Activated CD4-positive, alpha-beta memory T cell treated with anti-CD3 and anti-CD28 coated beads for 36 hours (primary cell): ENCODE measurements at regions of chr6 and their contacts with region 1.

Region 1: GRCh38 chr6:6057424-6058053 is 50.8 kb upstream of the NRN1 start:
- DNase-seq: no peak
- H3K4me3 Mint-ChIP-seq: no peak overlapping the region
- H3K27ac Mint-ChIP-seq: no peak overlapping the region
- H3K4me1 Mint-ChIP-seq: no peaks in the 10 kb centered on the region
- H3K27me3 Mint-ChIP-seq: peaks cover 21% of the 10 kb centered on the region

Region 2: GRCh38 chr6:5778317-5778857 is 279.2 kb before region 1 on chr6:
- CTCF ChIA-PET with region 1: no interaction called
- POLR2A ChIA-PET with region 1: no interaction called
- intact Hi-C with region 1: no loop called
- DNase-seq: no peak
- H3K4me3 Mint-ChIP-seq: no peak overlapping the region
- H3K27ac Mint-ChIP-seq: no peak overlapping the region
- H3K4me1 Mint-ChIP-seq: no peaks in the 10 kb centered on the region
- H3K27me3 Mint-ChIP-seq: no peaks in the 10 kb centered on the region

Region 3: GRCh38 chr6:5968817-5969734 is 88.5 kb before region 1 on chr6:
- CTCF ChIA-PET with region 1: no interaction called
- POLR2A ChIA-PET with region 1: no interaction called
- intact Hi-C with region 1: no loop called
- DNase-seq: no peak
- H3K4me3 Mint-ChIP-seq: no peak overlapping the region
- H3K27ac Mint-ChIP-seq: no peak overlapping the region
- H3K4me1 Mint-ChIP-seq: peaks cover 1% of the 10 kb centered on the region
- H3K27me3 Mint-ChIP-seq: peaks cover 6% of the 10 kb centered on the region

Region 4: GRCh38 chr6:6131492-6132109 is 74.1 kb after region 1 on chr6:
- CTCF ChIA-PET with region 1: interaction called, 14 read pairs
- POLR2A ChIA-PET with region 1: no interaction called
- intact Hi-C with region 1: loop called (anchors 5 kb)
- DNase-seq: no peak
- H3K4me3 Mint-ChIP-seq: no peak overlapping the region
- H3K27ac Mint-ChIP-seq: no peak overlapping the region
- H3K4me1 Mint-ChIP-seq: no peaks in the 10 kb centered on the region
- H3K27me3 Mint-ChIP-seq: peaks cover 5% of the 10 kb centered on the region